Heart left ventricle (tissue), 16 donors: ENCODE measurements at regions of chr5 and their contacts with region 1.

Region 1: DNA sequence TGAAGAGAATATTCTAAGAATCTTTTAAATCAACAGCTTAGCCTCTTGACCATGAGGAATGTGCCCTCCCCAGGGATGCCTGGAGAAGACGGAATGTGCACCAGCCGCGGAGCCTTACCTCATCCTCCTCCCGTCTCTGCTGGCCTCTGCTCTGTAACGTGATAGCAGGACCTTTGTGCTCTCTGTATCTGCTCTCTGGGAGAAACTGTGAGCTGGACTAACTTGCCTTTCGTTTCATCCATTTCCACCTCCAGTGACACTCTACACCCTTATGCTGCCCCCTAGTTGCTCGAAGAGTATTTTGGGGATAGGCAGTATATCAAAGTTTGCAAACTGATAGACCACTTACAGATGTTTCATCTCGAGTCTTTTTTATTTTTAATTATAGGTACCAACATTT is 141.4 kb downstream of the NPR3 start:
- DNase-seq: peak in 3 of 5 donors; percentile 7 to 46 (median 38)
- ATAC-seq: peak; percentile 55 to 82 (median 72)
- H3K4me3 ChIP-seq: no peak overlapping the region
- H3K27ac ChIP-seq: no peak overlapping the region
- H3K4me1 ChIP-seq: peaks cover 0 to 7% (median 0%) of the 10 kb centered on the region in 12 donors
- H3K27me3 ChIP-seq: no peaks in the 10 kb centered on the region
- CTCF ChIP-seq: peak in 11 of 12 donors; percentile 14 to 51 (median 35)
- POLR2A ChIP-seq: no peak

Region 2: GRCh38 chr5:32679218-32679617 is 173.3 kb before region 1 on chr5:
- intact Hi-C with region 1: no loop called
- DNase-seq: no peak
- ATAC-seq: peak in 1 of 4 donors; percentile 22
- H3K4me3 ChIP-seq: no peak overlapping the region
- H3K27ac ChIP-seq: no peak overlapping the region
- H3K4me1 ChIP-seq: no peaks in the 10 kb centered on the region
- H3K27me3 ChIP-seq: no peaks in the 10 kb centered on the region
- CTCF ChIP-seq: no peak
- POLR2A ChIP-seq: no peak

Region 3: DNA sequence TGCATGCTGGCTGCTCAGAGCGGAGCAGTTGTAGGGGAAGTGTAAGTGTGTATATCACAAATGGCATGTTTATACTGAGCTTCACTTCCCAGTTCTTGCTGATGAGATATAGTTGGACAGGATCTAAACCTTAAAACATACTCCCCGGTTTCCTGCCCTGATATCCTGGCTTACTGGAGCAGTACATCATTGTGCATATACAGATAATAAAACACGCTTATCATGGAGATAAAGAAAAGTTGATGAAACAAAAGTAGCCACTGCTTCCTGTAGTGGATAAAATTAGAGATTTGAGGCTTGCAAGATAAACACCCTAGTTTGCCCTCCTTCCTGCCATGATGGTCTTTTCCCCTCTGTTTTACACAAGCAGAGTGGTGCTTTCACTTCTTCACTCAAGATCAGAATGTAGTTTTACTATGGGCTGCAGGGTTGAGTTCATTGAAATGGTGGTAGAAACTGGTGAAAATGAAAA is 126.4 kb before region 1 on chr5:
- intact Hi-C with region 1: loop called in 1 of 10 experiments (anchors 10 kb)
- DNase-seq: no peak
- ATAC-seq: peak in 2 of 4 donors; percentile 31 to 66
- H3K4me3 ChIP-seq: no peak overlapping the region
- H3K27ac ChIP-seq: no peak overlapping the region
- H3K4me1 ChIP-seq: peaks cover 0 to 20% (median 1%) of the 10 kb centered on the region in 12 donors
- H3K27me3 ChIP-seq: no peaks in the 10 kb centered on the region
- CTCF ChIP-seq: no peak
- POLR2A ChIP-seq: no peak

Region 4: DNA sequence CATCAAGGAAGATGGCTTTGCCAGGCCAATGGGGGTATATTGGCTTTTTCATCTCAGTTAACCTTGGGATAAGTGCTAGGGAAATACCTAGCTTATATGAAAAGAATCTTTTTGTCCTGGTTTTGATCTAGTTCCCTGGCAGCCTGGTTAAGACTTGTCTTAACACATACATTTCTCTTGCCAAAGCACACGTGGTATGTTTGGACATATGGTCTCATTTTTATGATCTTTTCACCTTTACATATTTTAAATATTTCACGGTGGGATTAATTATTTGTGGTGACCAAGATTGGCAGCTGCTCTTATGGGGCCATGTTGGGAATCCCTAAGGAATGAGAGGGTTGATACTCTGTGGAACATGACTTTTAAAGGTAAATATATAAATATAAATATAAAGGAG is 171.1 kb after region 1 on chr5:
- intact Hi-C with region 1: no loop called
- DNase-seq: no peak
- ATAC-seq: no peak
- H3K4me3 ChIP-seq: no peak overlapping the region
- H3K27ac ChIP-seq: no peak overlapping the region
- H3K4me1 ChIP-seq: no peaks in the 10 kb centered on the region
- H3K27me3 ChIP-seq: no peaks in the 10 kb centered on the region
- CTCF ChIP-seq: no peak
- POLR2A ChIP-seq: no peak